ENCODE measurements at regions of chr6 and their contacts with region 1.

Region 1: GRCh38 chr6:43242908-43243663 is at the start of gene TTBK1:
- DNase-seq: no peak
- H3K4me3 ChIP-seq: no peak within 1 kb of the TSS
- H3K27ac ChIP-seq: no peak within 1 kb of the TSS
- H3K4me1 ChIP-seq: peaks cover 2 to 17% (median 15%) of the 10 kb centered on the region in 4 experiments
- H3K27me3 ChIP-seq: peaks cover 7 to 68% (median 36%) of the 10 kb centered on the region in 5 experiments

Region 2: GRCh38 chr6:42692137-42692911 is 550.8 kb before region 1 on chr6:
- CTCF ChIA-PET with region 1: no interaction called
- POLR2A ChIA-PET with region 1: no interaction called
- DNase-seq: no peak
- H3K4me3 ChIP-seq: no peak overlapping the region
- H3K27ac ChIP-seq: no peak overlapping the region
- H3K4me1 ChIP-seq: peaks cover 0 to 6% (median 1%) of the 10 kb centered on the region in 4 experiments
- H3K27me3 ChIP-seq: no peaks in the 10 kb centered on the region

Region 3: GRCh38 chr6:43228951-43229802 is 13.9 kb before region 1 on chr6 and contains the start of gene DNPH1:
- CTCF ChIA-PET with region 1: interaction called, 16 read pairs
- POLR2A ChIA-PET with region 1: interaction called, 3 read pairs
- DNase-seq: peak; percentile 60 to 73 (median 69)
- H3K4me3 ChIP-seq: peak within 1 kb of the TSS; percentile 61 to 85 (median 71)
- H3K27ac ChIP-seq: peak within 1 kb of the TSS in 1 of 2 experiments; percentile 34
- H3K4me1 ChIP-seq: peaks cover 0 to 30% (median 26%) of the 10 kb centered on the region in 4 experiments
- H3K27me3 ChIP-seq: peaks cover 0 to 2% (median 0%) of the 10 kb centered on the region in 5 experiments

Region 4: DNA sequence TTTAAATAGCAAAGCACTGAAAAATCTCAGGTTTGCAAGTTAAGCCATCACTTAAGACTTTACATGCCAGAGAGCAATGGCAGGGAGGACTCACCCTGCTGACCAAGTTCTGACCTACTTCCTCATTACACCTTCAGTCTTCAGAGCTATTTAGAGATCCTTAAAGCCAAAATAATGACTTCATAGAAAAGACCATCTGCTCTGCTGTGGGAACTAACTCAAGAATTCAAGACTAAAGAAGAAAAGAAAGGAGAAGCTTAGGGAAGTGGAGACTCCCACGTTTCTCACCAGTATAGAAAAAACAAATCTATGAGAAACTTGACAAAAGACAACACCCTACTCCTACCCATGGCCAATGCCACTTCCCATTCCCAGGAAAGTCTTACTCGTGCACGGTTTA is 304.1 kb after region 1 on chr6:
- CTCF ChIA-PET with region 1: no interaction called
- POLR2A ChIA-PET with region 1: interaction called, 11 read pairs
- DNase-seq: no peak
- H3K4me3 ChIP-seq: no peak overlapping the region
- H3K27ac ChIP-seq: no peak overlapping the region
- H3K4me1 ChIP-seq: no peaks in the 10 kb centered on the region
- H3K27me3 ChIP-seq: no peaks in the 10 kb centered on the region